H1 (cell line): ENCODE measurements at regions of chr3 and their contacts with region 1.

Region 1: GRCh38 chr3:100463002-100463401 is 29.4 kb upstream of the TMEM45A start:
- DNase-seq: no peak
- H3K4me3 ChIP-seq: no peak overlapping the region
- H3K27ac ChIP-seq: no peak overlapping the region
- H3K4me1 ChIP-seq: no peaks in the 10 kb centered on the region
- H3K27me3 ChIP-seq: no peaks in the 10 kb centered on the region; a peak in 1 of 7 replicates
- CTCF ChIP-seq: peak in 2 of 3 experiments; percentile 79 to 80; a peak in 3 of 4 replicates
- EP300 ChIP-seq: no peak
- POLR2A ChIP-seq: no peak
- RAD21 ChIP-seq: peak; percentile 95 to 98

Region 2: GRCh38 chr3:100449214-100449613 is 13.8 kb before region 1 on chr3:
- CTCF ChIA-PET with region 1: interaction called, 10 read pairs
- POLR2A ChIA-PET with region 1: interaction called, 3 read pairs
- DNase-seq: no peak
- H3K4me3 ChIP-seq: no peak overlapping the region
- H3K27ac ChIP-seq: no peak overlapping the region
- H3K4me1 ChIP-seq: no peaks in the 10 kb centered on the region; a peak in 2 of 7 replicates
- H3K27me3 ChIP-seq: no peaks in the 10 kb centered on the region
- CTCF ChIP-seq: no peak
- EP300 ChIP-seq: no peak
- POLR2A ChIP-seq: no peak
- RAD21 ChIP-seq: no peak

Region 3: GRCh38 chr3:100577382-100578002 is 114.5 kb after region 1 on chr3:
- CTCF ChIA-PET with region 1: interaction called, 22 read pairs
- POLR2A ChIA-PET with region 1: no interaction called
- DNase-seq: no peak
- H3K4me3 ChIP-seq: no peak overlapping the region; a peak in 1 of 8 replicates
- H3K27ac ChIP-seq: no peak overlapping the region
- H3K4me1 ChIP-seq: peaks cover 0 to 8% (median 1%) of the 10 kb centered on the region in 4 experiments; a peak in 2 of 7 replicates
- H3K27me3 ChIP-seq: no peaks in the 10 kb centered on the region
- CTCF ChIP-seq: no peak; a peak in 1 of 4 replicates
- EP300 ChIP-seq: no peak
- POLR2A ChIP-seq: no peak
- RAD21 ChIP-seq: no peak

Region 4: DNA sequence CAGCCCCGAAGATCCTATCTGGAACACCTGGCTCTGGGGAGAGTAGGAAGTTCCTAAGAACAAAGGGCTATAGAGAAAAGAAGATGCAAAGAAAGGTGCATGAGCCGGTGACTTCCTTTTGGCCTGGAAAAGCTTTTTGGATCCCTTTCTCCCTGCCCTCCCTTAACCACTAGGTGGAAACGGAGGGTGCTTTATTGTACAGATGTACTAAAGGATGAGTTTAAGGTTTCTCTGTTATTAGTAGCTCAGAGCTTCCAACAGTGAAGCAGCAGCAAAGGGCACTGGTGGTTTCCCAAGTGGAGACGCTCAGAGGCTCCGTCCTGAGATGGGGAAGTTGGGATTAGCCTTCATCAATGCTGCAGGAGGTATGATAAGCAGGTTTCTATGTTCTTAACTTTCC is 140.5 kb after region 1 on chr3:
- CTCF ChIA-PET with region 1: interaction called, 34 read pairs
- POLR2A ChIA-PET with region 1: no interaction called
- DNase-seq: no peak
- H3K4me3 ChIP-seq: no peak overlapping the region
- H3K27ac ChIP-seq: no peak overlapping the region
- H3K4me1 ChIP-seq: peaks cover 0 to 2% (median 2%) of the 10 kb centered on the region in 4 experiments; a peak in 4 of 7 replicates
- H3K27me3 ChIP-seq: no peaks in the 10 kb centered on the region
- CTCF ChIP-seq: peak in 2 of 3 experiments; percentile 30 to 57; a peak in 2 of 4 replicates
- EP300 ChIP-seq: no peak
- POLR2A ChIP-seq: no peak
- RAD21 ChIP-seq: peak; percentile 50 to 59

Region 5: DNA sequence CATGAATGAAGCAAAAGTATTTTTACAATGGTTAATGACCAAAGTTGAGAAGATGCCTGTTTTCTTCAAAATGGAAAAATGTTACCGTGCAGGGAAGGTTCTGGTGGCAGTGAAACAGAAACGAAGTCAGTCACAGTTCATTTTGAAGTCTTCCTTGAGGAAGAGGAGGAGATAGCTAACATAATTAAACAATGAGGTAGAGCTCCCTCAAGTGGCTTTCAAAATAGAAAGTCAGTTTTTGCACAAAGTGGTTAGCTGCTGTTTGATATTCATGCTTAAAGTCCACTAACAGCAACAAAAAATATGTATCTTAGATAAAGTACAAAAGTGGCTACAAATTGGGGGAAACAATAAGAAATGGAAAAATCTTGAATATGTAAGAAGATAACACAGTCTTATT is 333.6 kb after region 1 on chr3:
- CTCF ChIA-PET with region 1: interaction called, 16 read pairs
- POLR2A ChIA-PET with region 1: no interaction called
- DNase-seq: no peak
- H3K4me3 ChIP-seq: no peak overlapping the region
- H3K27ac ChIP-seq: no peak overlapping the region
- H3K4me1 ChIP-seq: no peaks in the 10 kb centered on the region
- H3K27me3 ChIP-seq: no peaks in the 10 kb centered on the region
- CTCF ChIP-seq: peak in 2 of 3 experiments; percentile 29 to 34; a peak in 2 of 4 replicates
- EP300 ChIP-seq: no peak
- POLR2A ChIP-seq: no peak
- RAD21 ChIP-seq: peak; percentile 62 to 67